Activated CD4-positive, alpha-beta T cell treated with anti-CD3 and anti-CD28 coated beads for 36 hours (primary cell): ENCODE measurements at regions of chr1 and their contacts with region 1.

Region 1: GRCh38 chr1:16041200-16041599 is 2.4 kb upstream of the CLCNKB start:
- DNase-seq: no peak
- ATAC-seq: no peak
- H3K4me3 Mint-ChIP-seq: no peak overlapping the region
- H3K27ac Mint-ChIP-seq: no peak overlapping the region
- H3K4me1 Mint-ChIP-seq: no peaks in the 10 kb centered on the region
- H3K27me3 Mint-ChIP-seq: no peaks in the 10 kb centered on the region

Region 2: GRCh38 chr1:16067127-16067768 is 26.0 kb after region 1 on chr1:
- CTCF ChIA-PET with region 1: no interaction called
- POLR2A ChIA-PET with region 1: no interaction called
- intact Hi-C with region 1: loop called in 1 of 2 experiments (anchors 1 kb)
- DNase-seq: peak; percentile 27
- ATAC-seq: no peak
- H3K4me3 Mint-ChIP-seq: no peak overlapping the region
- H3K27ac Mint-ChIP-seq: no peak overlapping the region
- H3K4me1 Mint-ChIP-seq: peaks cover 4% of the 10 kb centered on the region
- H3K27me3 Mint-ChIP-seq: peaks cover 8% of the 10 kb centered on the region

Region 3: DNA sequence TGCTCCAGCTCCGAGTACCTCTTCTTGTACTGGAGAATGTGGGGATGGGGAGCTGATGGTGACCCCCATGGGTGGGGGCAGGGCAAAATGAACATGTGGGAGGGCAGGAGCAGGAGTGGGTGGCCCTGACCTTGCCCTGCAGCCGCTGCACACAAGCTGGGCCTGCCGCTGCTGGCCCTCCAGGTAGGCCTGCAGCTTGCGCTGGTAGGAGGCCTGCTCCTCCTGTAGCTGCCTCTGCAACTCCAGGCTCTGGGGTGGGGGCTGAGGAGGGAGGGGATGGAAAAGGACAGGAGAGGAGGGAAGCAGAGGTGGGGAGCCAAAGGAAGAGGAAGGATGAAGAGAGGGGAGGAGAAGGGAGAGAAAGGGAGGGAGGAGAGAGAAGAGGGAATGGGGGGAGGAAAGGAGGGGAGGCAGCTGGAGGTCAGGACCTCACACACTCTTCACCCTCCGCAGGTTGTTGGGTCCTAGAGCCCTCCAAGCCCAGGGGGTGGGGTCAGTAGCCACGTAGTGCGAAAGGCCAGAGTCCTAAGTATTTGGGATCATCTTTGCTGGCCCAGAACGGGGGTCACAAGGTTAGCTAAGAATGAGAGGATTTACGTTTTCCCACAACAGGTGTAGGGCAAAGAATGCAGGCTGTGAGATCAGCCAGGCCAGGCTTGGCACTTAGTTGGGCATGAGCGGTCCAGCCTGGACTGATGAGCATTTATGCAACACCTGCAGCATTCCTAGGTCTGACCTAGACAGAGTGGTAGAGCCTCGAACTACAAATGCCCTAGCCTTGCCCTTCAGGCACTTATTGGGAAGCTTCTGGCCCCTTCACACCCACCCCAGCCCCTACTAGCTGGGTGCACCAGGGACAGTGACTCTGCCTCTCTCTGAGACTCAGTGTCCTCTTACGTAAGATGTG is 450.1 kb after region 1 on chr1:
- CTCF ChIA-PET with region 1: no interaction called
- POLR2A ChIA-PET with region 1: no interaction called
- intact Hi-C with region 1: no loop called
- DNase-seq: no peak
- ATAC-seq: no peak
- H3K4me3 Mint-ChIP-seq: no peak overlapping the region
- H3K27ac Mint-ChIP-seq: peak overlapping the region; percentile 31
- H3K4me1 Mint-ChIP-seq: peaks cover 5% of the 10 kb centered on the region
- H3K27me3 Mint-ChIP-seq: no peaks in the 10 kb centered on the region